PC-3 (cell line): ENCODE measurements at regions of chr3 and their contacts with region 1.

Region 1: GRCh38 chr3:96813134-96813819 is 1.1 kb upstream of the EPHA6 start:
- DNase-seq: peak; percentile 87
- ATAC-seq: peak; percentile 74
- H3K4me3 ChIP-seq: peak overlapping the region; percentile 81
- H3K27ac ChIP-seq: no peak overlapping the region
- H3K4me1 ChIP-seq: peaks cover 8% of the 10 kb centered on the region
- H3K27me3 ChIP-seq: peaks cover 13% of the 10 kb centered on the region
- CTCF ChIP-seq: peak; percentile 87

Region 2: DNA sequence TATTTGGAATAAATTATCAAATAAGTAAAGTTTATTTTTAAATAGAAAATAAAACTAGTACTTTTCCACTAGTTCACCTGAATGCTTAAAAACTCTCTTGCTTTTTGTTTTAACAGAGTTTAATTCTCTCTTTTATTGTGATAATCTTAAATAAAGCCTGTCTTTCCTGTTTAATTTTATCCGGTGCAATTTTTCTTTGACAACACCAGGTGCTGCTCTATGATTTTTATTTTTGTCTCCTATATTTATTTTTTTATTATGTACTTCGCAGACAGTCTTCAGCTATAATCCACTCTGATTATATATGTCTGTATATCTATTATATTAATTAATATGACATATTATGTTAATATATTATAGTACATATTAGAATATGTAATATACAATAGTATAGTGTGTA is 1291.9 kb before region 1 on chr3:
- CTCF ChIA-PET with region 1: no interaction called
- POLR2A ChIA-PET with region 1: no interaction called
- intact Hi-C with region 1: loop called (anchors 2 kb)
- DNase-seq: peak; percentile 12
- ATAC-seq: no peak
- H3K4me3 ChIP-seq: no peak overlapping the region
- H3K27ac ChIP-seq: no peak overlapping the region
- H3K4me1 ChIP-seq: no peaks in the 10 kb centered on the region
- H3K27me3 ChIP-seq: no peaks in the 10 kb centered on the region
- CTCF ChIP-seq: peak; percentile 41; the same call in 1 of the 2 replicates

Region 3: GRCh38 chr3:96488708-96489107 is 324.6 kb before region 1 on chr3:
- CTCF ChIA-PET with region 1: interaction called, 4 read pairs
- POLR2A ChIA-PET with region 1: no interaction called
- intact Hi-C with region 1: loop called (anchors 5 kb)
- DNase-seq: no peak
- ATAC-seq: no peak
- H3K4me3 ChIP-seq: no peak overlapping the region
- H3K27ac ChIP-seq: no peak overlapping the region
- H3K4me1 ChIP-seq: peaks cover 13% of the 10 kb centered on the region
- H3K27me3 ChIP-seq: no peaks in the 10 kb centered on the region
- CTCF ChIP-seq: no peak

Region 4: GRCh38 chr3:96705895-96706294 is 107.4 kb before region 1 on chr3:
- CTCF ChIA-PET with region 1: no interaction called
- POLR2A ChIA-PET with region 1: no interaction called
- intact Hi-C with region 1: loop called (anchors 2 kb)
- DNase-seq: peak; percentile 4
- ATAC-seq: peak; percentile 29
- H3K4me3 ChIP-seq: 0 out of 2 replicates have a peak overlapping the region, but pooled peaks have one; percentile 4
- H3K27ac ChIP-seq: peak overlapping the region; percentile 77
- H3K4me1 ChIP-seq: peaks cover 25% of the 10 kb centered on the region
- H3K27me3 ChIP-seq: no peaks in the 10 kb centered on the region
- CTCF ChIP-seq: no peak

Region 5: DNA sequence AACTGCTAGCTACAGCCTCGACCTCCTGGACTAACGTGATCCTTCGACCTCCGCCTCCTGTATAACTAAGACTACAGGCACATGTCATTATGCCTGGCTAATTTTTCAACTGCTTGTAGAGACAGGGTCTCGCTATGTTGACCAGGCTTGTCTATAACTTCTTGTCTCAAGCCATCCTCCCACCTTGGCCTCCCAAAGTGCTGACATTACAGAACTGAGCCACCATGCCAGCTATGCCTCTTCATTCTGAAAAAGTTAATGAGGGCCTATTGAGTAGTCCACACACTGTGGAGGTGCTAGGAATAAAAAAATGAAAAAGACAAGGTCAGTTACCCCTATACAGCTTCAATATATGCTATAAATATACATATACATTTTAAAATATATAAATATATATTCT is 17.2 kb before region 1 on chr3:
- CTCF ChIA-PET with region 1: no interaction called
- POLR2A ChIA-PET with region 1: no interaction called
- intact Hi-C with region 1: no loop called
- DNase-seq: no peak
- ATAC-seq: no peak
- H3K4me3 ChIP-seq: no peak overlapping the region
- H3K27ac ChIP-seq: no peak overlapping the region
- H3K4me1 ChIP-seq: no peaks in the 10 kb centered on the region
- H3K27me3 ChIP-seq: no peaks in the 10 kb centered on the region
- CTCF ChIP-seq: no peak

Region 6: GRCh38 chr3:96863129-96863740 is 50.0 kb after region 1 on chr3:
- CTCF ChIA-PET with region 1: no interaction called
- POLR2A ChIA-PET with region 1: no interaction called
- intact Hi-C with region 1: loop called (anchors 2 kb)
- DNase-seq: peak; percentile 63
- ATAC-seq: peak; percentile 67
- H3K4me3 ChIP-seq: no peak overlapping the region
- H3K27ac ChIP-seq: no peak overlapping the region
- H3K4me1 ChIP-seq: no peaks in the 10 kb centered on the region
- H3K27me3 ChIP-seq: no peaks in the 10 kb centered on the region
- CTCF ChIP-seq: peak; percentile 78

Region 7: GRCh38 chr3:97099381-97099780 is 286.1 kb after region 1 on chr3:
- CTCF ChIA-PET with region 1: no interaction called
- POLR2A ChIA-PET with region 1: no interaction called
- intact Hi-C with region 1: no loop called
- DNase-seq: no peak
- ATAC-seq: no peak
- H3K4me3 ChIP-seq: no peak overlapping the region
- H3K27ac ChIP-seq: no peak overlapping the region
- H3K4me1 ChIP-seq: no peaks in the 10 kb centered on the region
- H3K27me3 ChIP-seq: no peaks in the 10 kb centered on the region
- CTCF ChIP-seq: no peak

Region 8: DNA sequence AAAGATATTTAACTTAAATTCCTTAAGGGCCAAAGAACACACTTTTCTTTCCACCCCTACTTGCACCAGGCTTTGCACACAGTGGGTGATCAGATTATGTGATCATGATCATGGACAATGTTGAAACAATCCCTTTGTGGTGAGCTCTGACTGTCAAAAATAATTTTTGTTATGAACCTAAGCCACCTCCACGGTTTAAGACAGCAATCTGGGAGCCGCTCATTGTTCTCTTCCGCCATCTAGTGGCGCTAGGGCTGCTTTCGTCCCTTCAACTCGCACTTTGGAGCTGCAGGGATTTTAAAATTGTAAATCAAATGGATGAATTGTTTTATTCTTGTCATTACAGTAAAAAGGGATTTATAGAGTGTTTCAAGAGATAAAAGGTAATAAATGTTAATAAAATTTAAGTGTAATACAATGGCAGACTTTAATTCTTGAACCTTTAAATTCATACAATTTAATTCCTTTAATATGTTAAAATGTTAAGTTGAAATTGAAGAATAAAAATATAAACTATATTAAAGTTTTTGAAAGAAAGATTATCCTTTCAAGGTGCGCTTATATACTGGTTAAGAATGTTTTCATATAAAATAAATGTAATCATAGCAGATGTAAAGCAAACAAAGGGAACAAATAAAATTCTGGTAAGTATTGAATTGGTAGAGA is 906.0 kb after region 1 on chr3:
- CTCF ChIA-PET with region 1: no interaction called
- POLR2A ChIA-PET with region 1: no interaction called
- intact Hi-C with region 1: loop called (anchors 2 kb)
- DNase-seq: peak; percentile 88
- ATAC-seq: peak; percentile 94
- H3K4me3 ChIP-seq: peak overlapping the region; percentile 37; the same call in 1 of the 2 replicates
- H3K27ac ChIP-seq: no peak overlapping the region
- H3K4me1 ChIP-seq: no peaks in the 10 kb centered on the region
- H3K27me3 ChIP-seq: no peaks in the 10 kb centered on the region
- CTCF ChIP-seq: peak; percentile 98